RWPE1 (cell line): ENCODE measurements at regions of chr2 and their contacts with region 1.

Region 1: DNA sequence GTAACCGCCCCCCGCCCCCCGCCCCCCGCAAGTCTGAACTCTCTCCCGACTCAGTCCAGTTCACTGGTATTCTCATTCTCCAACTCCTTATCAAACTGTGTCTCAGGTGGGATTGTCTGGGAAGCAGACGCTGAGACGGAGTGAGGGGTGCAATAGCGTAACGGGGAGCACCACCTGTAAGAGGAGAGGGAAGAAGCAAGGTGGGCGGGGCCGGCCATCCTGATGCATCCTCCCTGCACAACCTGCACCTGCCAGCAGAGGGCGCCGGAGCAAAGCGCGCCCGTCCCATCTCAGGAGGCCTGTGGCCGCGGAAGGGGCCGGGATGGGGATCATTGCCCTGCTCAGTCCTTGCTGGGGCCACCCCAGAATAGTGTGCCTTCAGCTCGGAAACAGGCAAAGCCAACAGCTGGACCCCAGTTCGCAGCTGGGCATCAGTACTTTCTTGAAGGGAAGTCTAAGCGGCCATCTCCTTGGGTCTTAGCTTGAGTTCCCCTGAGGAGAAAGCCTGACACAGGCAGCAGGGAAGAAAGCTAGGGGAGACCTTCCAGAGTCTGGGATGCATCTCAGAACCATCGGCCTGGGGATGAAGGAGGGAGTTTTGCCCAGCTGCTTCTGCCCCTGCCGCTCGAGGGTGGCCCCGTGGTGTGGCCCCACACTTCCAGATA is 208.0 kb downstream of the TFCP2L1 start:
- DNase-seq: peak; percentile 72
- H3K27ac ChIP-seq: no peak overlapping the region
- CTCF ChIP-seq: peak; percentile 86

Region 2: DNA sequence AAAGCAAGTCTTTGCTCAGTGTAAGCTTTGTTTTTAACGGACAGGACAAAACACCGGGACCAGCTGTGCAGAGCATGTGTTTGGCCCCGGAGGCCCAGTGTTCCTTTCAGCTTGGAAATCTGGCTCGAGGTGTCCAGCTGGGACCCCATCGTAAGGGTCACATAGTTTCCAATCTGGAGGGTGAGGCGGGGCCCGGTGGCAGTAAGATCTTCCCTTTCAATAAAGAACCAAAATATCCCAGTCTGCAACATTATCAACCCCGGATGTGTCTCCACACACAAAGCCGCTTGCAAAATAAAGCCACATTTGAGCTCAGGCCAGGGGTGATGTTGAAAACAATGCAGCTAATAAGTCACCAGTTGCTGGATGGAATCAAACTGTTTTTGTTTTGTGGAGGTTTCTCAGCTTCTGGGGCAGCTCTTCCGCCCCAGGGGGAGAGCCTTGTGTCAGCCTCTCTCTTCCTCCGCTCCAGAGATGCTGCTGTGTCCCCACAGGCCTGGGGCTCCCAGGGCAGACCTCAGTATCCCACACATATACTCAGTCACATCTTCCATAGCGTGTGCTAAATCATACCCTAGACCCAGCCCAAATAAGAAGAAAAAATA is 479.9 kb before region 1 on chr2:
- CTCF ChIA-PET with region 1: no interaction called
- POLR2A ChIA-PET with region 1: interaction called, 12 read pairs
- DNase-seq: no peak
- H3K27ac ChIP-seq: no peak overlapping the region
- CTCF ChIP-seq: no peak